ENCODE measurements at regions of chr10 and their contacts with region 1.

Region 1: GRCh38 chr10:74419958-74420375 is 268.9 kb downstream of the ADK start:
- DNase-seq: peak; percentile 5
- ATAC-seq: peak; percentile 84
- H3K4me3 ChIP-seq: no peak overlapping the region
- H3K27ac ChIP-seq: no peak overlapping the region
- H3K4me1 ChIP-seq: no peaks in the 10 kb centered on the region
- H3K27me3 ChIP-seq: no peaks in the 10 kb centered on the region
- CTCF ChIP-seq: peak; percentile 16 to 44 (median 38); a peak in 4 of 6 replicates
- EP300 ChIP-seq: no peak
- POLR2A ChIP-seq: no peak
- RAD21 ChIP-seq: 0 out of 2 replicates have a peak, but pooled peaks have one; percentile 29

Region 2: DNA sequence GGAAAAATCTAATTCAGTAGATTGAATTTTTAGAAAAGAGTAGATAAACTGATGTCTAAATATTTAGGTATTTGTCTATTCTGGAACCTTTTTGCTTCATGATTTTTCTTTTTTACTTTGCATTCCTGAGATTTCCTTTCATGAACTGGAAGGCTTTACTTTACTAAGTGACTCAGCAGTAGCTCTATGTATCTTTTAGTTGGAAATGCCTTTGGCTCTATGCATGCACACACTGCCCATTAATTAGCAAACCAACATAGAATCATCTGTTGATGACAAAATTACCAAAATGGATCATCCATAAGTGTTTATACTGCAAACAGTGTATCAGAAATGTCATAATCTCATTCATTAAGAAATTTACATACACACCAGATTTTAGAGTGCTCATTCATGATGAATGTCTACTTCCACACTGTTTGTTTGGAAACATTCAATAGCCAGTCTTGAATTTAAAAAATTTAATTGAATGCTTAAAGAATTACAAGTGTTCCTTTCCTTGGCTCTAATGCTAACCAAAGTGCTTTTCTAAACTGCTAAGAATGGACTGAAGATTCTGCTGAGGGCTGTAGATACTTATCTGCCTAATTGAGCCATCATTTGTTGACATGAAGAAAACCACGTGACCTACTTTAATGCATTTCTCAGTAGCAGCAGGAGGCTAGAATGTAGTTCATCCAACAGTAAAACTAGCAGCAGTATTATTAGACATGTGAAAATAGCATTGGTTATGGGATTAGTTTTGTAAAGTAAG is 13.1 kb after region 1 on chr10:
- CTCF ChIA-PET with region 1: interaction called, 15 read pairs
- POLR2A ChIA-PET with region 1: interaction called, 3 read pairs
- RAD21 ChIA-PET with region 1: interaction called, 4 read pairs
- SMC1A ChIA-PET with region 1: interaction called, 10 read pairs
- in situ Hi-C with region 1: no loop called
- intact Hi-C with region 1: no loop called
- DNase-seq: no peak
- ATAC-seq: no peak
- H3K4me3 ChIP-seq: no peak overlapping the region
- H3K27ac ChIP-seq: no peak overlapping the region
- H3K4me1 ChIP-seq: no peaks in the 10 kb centered on the region
- H3K27me3 ChIP-seq: no peaks in the 10 kb centered on the region
- CTCF ChIP-seq: no peak
- EP300 ChIP-seq: no peak
- POLR2A ChIP-seq: no peak
- RAD21 ChIP-seq: no peak

Region 3: DNA sequence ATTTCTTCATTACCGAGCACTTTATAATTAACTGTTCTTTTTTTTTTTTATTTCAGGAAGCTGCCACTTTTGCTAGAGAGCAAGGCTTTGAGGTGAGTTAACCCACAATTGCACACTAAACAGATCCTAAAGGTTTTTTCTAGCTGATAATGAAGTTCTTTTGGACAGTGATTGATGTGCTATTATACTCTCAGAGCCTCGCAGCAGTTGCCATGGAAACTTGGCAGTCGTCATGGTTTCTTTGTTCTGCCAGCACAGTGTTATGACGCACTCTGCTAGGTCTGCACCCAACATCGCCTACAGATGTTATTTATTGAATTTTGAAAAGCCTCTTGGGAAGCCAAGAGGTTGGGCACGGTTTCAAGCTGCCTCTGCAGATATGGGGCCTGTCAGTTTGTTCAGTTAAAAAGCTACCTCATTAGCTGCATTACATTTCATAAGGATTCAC is 169.3 kb after region 1 on chr10:
- CTCF ChIA-PET with region 1: no interaction called
- POLR2A ChIA-PET with region 1: no interaction called
- RAD21 ChIA-PET with region 1: interaction called, 8 read pairs
- SMC1A ChIA-PET with region 1: interaction called, 9 read pairs
- in situ Hi-C with region 1: no loop called
- intact Hi-C with region 1: loop called (anchors 10 kb)
- DNase-seq: peak; percentile 82
- ATAC-seq: peak; percentile 75
- H3K4me3 ChIP-seq: no peak overlapping the region
- H3K27ac ChIP-seq: no peak overlapping the region
- H3K4me1 ChIP-seq: peaks cover 23% of the 10 kb centered on the region
- H3K27me3 ChIP-seq: no peaks in the 10 kb centered on the region
- CTCF ChIP-seq: no peak
- EP300 ChIP-seq: peak; percentile 80 to 92
- POLR2A ChIP-seq: no peak
- RAD21 ChIP-seq: no peak

Region 4: DNA sequence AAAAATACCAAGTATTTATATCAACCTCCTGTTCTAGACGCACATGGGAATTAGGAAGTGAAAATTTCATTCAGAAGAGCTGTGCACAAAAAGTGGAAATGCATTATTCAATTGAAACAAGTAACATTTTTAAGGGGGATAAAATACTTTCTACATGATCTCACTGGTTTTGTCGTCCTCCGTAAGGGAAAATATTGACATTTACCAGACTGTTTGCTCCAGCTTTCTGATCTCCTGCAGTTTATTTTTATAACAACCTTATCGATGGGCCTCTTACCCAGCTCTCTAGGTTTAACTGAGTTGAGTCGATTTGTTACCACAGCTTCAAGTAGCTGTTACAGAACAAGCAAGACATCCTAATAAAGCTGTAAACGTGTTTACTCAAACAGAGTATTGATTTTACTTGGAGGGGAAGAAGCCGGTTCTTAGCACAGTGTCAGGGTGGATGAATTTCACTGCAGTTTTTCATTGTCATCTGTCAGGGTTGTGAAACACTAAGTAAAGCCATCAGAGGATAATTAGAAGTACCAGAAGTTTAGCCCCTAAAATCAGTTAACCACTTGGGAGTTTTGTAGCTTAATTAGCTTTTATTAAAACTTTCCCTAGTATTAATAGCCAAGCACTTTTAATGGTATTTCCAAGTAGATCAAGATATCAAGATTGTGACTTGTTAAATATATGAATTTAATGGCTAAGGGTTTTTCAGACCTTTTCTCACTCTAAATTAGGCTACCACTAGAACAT is 263.8 kb after region 1 on chr10:
- CTCF ChIA-PET with region 1: interaction called, 10 read pairs
- POLR2A ChIA-PET with region 1: no interaction called
- RAD21 ChIA-PET with region 1: interaction called, 12 read pairs
- SMC1A ChIA-PET with region 1: interaction called, 4 read pairs
- in situ Hi-C with region 1: no loop called
- intact Hi-C with region 1: no loop called
- DNase-seq: no peak
- ATAC-seq: peak; percentile 72
- H3K4me3 ChIP-seq: no peak overlapping the region; the same call in 1 of the 2 replicates
- H3K27ac ChIP-seq: peak overlapping the region; percentile 83
- H3K4me1 ChIP-seq: peaks cover 23% of the 10 kb centered on the region
- H3K27me3 ChIP-seq: no peaks in the 10 kb centered on the region
- CTCF ChIP-seq: no peak
- EP300 ChIP-seq: 0 out of 4 replicates have a peak, but pooled peaks of 1 of the 2 experiments have one; percentile 41
- POLR2A ChIP-seq: no peak
- RAD21 ChIP-seq: no peak

Region 5: DNA sequence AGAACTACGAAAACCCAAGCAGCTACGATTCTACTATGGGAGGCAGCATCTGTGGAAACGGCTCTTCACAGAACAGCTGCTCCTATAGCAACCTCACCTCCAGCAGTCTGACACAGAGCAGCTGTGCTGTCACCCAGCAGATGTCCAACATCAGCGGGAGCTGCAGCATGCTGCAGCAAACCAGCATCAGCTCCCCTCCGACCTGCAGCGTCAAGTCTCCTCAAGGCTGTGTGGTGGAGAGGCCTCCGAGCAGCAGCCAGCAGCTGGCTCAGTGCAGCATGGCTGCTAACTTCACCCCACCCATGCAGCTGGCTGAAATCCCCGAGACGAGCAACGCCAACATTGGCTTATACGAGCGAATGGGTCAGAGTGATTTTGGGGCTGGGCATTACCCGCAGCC is 609.9 kb after region 1 on chr10:
- CTCF ChIA-PET with region 1: no interaction called
- POLR2A ChIA-PET with region 1: no interaction called
- RAD21 ChIA-PET with region 1: interaction called, 3 read pairs
- SMC1A ChIA-PET with region 1: interaction called, 4 read pairs
- in situ Hi-C with region 1: no loop called
- intact Hi-C with region 1: loop called (anchors 10 kb)
- DNase-seq: no peak
- ATAC-seq: no peak
- H3K4me3 ChIP-seq: no peak overlapping the region
- H3K27ac ChIP-seq: no peak overlapping the region
- H3K4me1 ChIP-seq: peaks cover 15% of the 10 kb centered on the region
- H3K27me3 ChIP-seq: no peaks in the 10 kb centered on the region
- CTCF ChIP-seq: no peak
- EP300 ChIP-seq: no peak
- POLR2A ChIP-seq: no peak
- RAD21 ChIP-seq: no peak

Measured in GM12878 (cell line).